ENCODE measurements at regions of chr11 and their contacts with region 1.

Region 1: DNA sequence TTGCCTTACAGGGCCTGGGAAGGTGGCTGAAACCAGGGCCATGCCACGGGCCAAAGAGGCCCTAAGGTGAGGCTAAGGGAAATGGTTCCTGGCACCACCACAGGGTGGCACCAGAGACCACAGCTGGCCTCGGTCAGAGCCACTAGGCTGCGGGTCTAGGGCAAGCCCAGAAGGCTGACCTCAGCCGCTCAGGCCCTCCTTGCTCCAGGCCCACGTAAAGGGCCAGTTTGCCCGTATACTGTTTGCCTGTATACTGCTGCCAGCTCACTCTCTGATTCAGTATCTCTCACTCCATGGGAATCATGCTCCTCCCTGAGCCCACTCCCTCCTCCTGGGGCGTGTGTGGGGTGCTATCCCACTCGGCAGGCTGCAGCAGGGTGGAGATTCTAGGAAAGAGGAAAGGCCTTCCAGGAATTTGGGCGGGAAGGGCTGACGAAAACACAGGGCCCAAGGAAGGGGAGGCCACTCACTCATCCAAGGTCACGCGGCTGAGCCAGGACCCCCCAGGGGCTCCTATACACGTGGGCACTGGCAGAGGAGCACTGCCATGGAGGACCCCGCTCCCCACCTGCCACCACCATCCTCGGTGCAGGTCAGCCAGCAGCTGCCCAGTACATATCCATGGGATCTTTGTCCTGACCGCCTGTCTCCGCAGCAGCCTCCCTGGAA is 62.4 kb downstream of the NECTIN1 start:
- DNase-seq: peak; percentile 58
- H3K4me3 ChIP-seq: no peak overlapping the region
- H3K27ac ChIP-seq: peak overlapping the region; percentile 4
- H3K4me1 ChIP-seq: peaks cover 26% of the 10 kb centered on the region
- H3K27me3 ChIP-seq: no peaks in the 10 kb centered on the region
- CTCF ChIP-seq: peak; percentile 76 to 92

Region 2: DNA sequence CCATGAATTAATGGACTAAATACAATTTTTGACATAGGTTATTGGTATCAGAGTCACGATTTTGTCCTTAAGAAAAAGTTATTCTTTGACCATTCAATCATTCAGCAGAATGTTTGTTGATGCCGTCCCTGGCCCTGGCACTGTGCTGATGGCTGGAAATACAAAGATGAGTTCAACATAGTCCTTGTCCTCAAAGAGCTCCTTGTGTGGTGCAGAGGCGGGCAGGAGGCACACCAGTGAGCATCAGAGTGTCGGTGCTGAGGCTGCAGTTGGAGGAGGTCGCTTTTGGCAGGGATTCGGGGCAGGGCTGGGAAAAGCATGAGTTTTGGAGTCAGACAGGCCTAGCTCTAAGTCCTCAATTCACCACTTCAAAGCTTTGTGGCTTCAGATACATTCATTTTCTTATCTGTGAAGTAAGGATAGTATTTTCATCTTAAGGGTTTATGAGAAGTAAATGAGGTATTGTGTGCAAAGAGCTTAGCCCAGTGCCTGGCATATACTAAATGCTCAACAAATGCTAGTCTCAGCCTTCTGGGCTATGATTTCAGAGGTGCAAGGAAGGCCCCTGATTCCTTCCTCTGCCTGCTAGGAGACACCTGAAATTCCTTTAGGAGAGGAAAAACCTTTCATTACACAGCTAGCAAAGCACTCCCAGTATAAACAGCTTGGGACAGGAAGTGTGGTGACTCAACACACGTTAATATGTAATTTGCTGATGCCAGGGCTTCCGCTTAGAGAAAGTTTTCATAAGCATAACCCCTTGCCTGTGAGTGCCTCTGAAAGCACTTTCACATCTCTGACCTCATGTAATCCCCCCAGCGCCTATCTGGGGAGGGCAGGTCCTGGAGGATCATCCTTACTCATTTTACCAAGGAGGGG is 51.4 kb before region 1 on chr11:
- CTCF ChIA-PET with region 1: no interaction called
- dilution Hi-C with region 1: loop called (anchors 5 kb)
- in situ Hi-C with region 1: no loop called
- intact Hi-C with region 1: no loop called
- DNase-seq: peak; percentile 78
- H3K4me3 ChIP-seq: no peak overlapping the region
- H3K27ac ChIP-seq: peak overlapping the region; percentile 32
- H3K4me1 ChIP-seq: peaks cover 23% of the 10 kb centered on the region
- H3K27me3 ChIP-seq: no peaks in the 10 kb centered on the region
- CTCF ChIP-seq: no peak

Region 3: GRCh38 chr11:119709638-119710346 is 43.2 kb after region 1 on chr11:
- CTCF ChIA-PET with region 1: no interaction called
- dilution Hi-C with region 1: loop called (anchors 10 kb)
- in situ Hi-C with region 1: no loop called
- intact Hi-C with region 1: no loop called
- DNase-seq: no peak
- H3K4me3 ChIP-seq: no peak overlapping the region
- H3K27ac ChIP-seq: no peak overlapping the region
- H3K4me1 ChIP-seq: peaks cover 30% of the 10 kb centered on the region
- H3K27me3 ChIP-seq: no peaks in the 10 kb centered on the region
- CTCF ChIP-seq: no peak

Region 4: GRCh38 chr11:119741369-119742262 is 75.0 kb after region 1 on chr11:
- CTCF ChIA-PET with region 1: no interaction called
- dilution Hi-C with region 1: no loop called
- in situ Hi-C with region 1: no loop called
- intact Hi-C with region 1: loop called (anchors 1 kb)
- DNase-seq: no peak
- H3K4me3 ChIP-seq: peak overlapping the region in 2 of 3 experiments; percentile 25 to 31
- H3K27ac ChIP-seq: no peak overlapping the region
- H3K4me1 ChIP-seq: peaks cover 10% of the 10 kb centered on the region
- H3K27me3 ChIP-seq: peaks cover 2% of the 10 kb centered on the region
- CTCF ChIP-seq: peak; percentile 59 to 84

Region 5: GRCh38 chr11:119752345-119752871 is 85.8 kb after region 1 on chr11:
- CTCF ChIA-PET with region 1: no interaction called
- dilution Hi-C with region 1: loop called (anchors 5 kb)
- in situ Hi-C with region 1: no loop called
- intact Hi-C with region 1: no loop called
- DNase-seq: peak; percentile 74
- H3K4me3 ChIP-seq: no peak overlapping the region
- H3K27ac ChIP-seq: no peak overlapping the region
- H3K4me1 ChIP-seq: peaks cover 27% of the 10 kb centered on the region
- H3K27me3 ChIP-seq: no peaks in the 10 kb centered on the region
- CTCF ChIP-seq: peak; percentile 12 to 45

Region 6: GRCh38 chr11:119999220-119999619 is 332.6 kb after region 1 on chr11:
- CTCF ChIA-PET with region 1: no interaction called
- dilution Hi-C with region 1: no loop called
- in situ Hi-C with region 1: no loop called
- intact Hi-C with region 1: loop called (anchors 5 kb)
- DNase-seq: peak; percentile 6
- H3K4me3 ChIP-seq: no peak overlapping the region
- H3K27ac ChIP-seq: no peak overlapping the region
- H3K4me1 ChIP-seq: peaks cover 9% of the 10 kb centered on the region
- H3K27me3 ChIP-seq: no peaks in the 10 kb centered on the region
- CTCF ChIP-seq: peak; percentile 40 to 56

Region 7: DNA sequence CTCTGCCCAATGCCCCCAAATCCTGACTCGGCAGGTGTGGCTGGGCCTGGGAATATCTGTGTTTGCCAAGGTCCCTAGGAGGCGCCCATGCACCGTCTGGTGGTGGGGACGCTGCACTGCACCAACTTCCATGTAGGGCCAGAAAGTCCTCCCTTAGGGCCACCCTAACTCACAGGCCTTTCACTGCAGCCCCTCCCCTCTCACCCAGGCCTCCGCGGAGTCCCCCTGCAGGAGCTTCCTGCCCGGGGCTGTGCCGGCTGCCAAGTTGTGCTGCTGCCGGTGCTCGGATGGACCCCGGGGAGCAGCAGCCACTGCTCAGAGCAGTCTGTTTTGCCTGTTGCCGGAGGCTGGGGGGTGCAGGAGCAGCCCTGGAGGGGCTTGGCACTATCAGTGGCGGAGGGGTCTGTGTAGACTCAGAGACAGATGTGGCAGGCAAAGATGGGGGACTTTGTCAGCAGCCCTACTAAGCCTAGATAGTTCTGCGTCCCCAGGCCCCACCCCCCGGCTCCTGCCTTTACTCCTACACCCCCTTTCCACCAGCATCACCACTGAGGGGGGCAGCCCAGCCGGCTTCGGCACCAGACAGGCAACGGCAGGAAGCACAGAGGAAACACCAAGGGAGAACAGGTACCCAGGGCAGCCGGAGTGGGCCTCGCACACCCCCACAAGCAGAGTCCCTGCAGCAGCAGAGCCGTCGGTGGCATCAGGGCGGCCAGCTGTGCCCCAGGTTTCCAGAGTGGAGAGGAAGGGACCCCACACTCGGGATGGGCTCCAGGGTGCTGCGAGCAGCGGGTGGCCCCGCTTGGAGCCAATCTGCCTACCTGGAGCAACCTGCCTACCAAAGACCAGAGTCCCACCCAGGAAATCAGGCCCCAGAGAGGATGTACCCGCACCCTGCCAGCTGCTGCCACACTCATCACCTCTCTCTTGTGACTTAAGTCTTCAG is 347.0 kb after region 1 on chr11:
- CTCF ChIA-PET with region 1: no interaction called
- dilution Hi-C with region 1: no loop called
- in situ Hi-C with region 1: no loop called
- intact Hi-C with region 1: loop called (anchors 1 kb)
- DNase-seq: peak; percentile 40
- H3K4me3 ChIP-seq: no peak overlapping the region
- H3K27ac ChIP-seq: no peak overlapping the region
- H3K4me1 ChIP-seq: no peaks in the 10 kb centered on the region
- H3K27me3 ChIP-seq: peaks cover 2% of the 10 kb centered on the region
- CTCF ChIP-seq: peak; percentile 87 to 98